HepG2 (cell line): ENCODE measurements at regions of chr9 and their contacts with region 1.

Region 1: DNA sequence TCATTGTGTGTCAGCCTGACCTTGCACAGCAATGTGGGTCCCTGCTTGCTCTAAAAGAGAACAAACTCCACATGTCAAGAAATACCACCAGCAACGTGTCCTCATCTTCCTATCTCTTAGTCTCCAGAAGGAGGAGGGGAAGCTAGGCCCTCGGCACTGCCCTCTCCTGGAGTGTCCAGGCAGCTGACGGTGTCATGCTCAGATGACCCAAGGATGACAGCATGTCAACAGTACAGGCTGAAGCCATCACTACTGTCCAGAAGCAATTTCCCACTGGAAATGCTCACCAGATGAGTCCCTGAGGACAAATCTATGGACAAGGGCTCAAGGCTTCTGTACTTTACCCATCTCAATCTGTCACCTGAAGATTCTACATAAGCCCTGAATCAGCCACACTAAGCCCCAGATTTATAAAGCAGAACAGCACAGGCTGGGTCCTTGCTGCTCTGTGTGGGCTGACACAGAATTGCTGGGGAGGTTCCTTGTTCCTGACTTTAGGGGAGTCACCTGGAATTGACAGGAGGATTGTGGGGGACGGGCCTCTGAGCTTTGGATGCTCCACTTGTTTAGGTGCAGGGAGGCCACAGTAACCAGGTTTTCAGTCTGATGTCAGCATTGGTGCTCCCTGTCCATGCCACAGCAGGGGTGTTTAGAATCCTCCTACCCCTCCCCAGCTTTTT is 210.2 kb downstream of the DAB2IP start:
- DNase-seq: peak; percentile 43
- ATAC-seq: peak; percentile 99
- H3K4me3 ChIP-seq: no peak overlapping the region
- H3K27ac ChIP-seq: no peak overlapping the region
- H3K4me1 ChIP-seq: no peaks in the 10 kb centered on the region
- H3K27me3 ChIP-seq: peaks cover 0 to 35% of the 10 kb centered on the region in 2 experiments; a peak in 3 of 5 replicates
- CTCF ChIP-seq: peak; percentile 92
- EP300 ChIP-seq: no peak
- POLR2A ChIP-seq: no peak
- RAD21 ChIP-seq: peak; percentile 78

Region 2: GRCh38 chr9:121545875-121546423 is 315.7 kb before region 1 on chr9:
- CTCF ChIA-PET with region 1: no interaction called
- POLR2A ChIA-PET with region 1: no interaction called
- in situ Hi-C with region 1: loop called (anchors 10 kb)
- intact Hi-C with region 1: loop called (anchors 2 kb)
- DNase-seq: peak; percentile 89
- ATAC-seq: peak; percentile 98
- H3K4me3 ChIP-seq: peak overlapping the region in 2 of 3 experiments; percentile 16 to 36; a peak in 2 of 6 replicates
- H3K27ac ChIP-seq: no peak overlapping the region
- H3K4me1 ChIP-seq: 0 out of 2 replicates have a peak, but pooled peaks cover 13% of the 10 kb centered on the region
- H3K27me3 ChIP-seq: peaks cover 0 to 5% of the 10 kb centered on the region in 2 experiments; a peak in 1 of 5 replicates
- CTCF ChIP-seq: peak; percentile 99
- EP300 ChIP-seq: no peak
- POLR2A ChIP-seq: no peak
- RAD21 ChIP-seq: peak; percentile 96

Region 3: GRCh38 chr9:121634329-121635261 is 227.0 kb before region 1 on chr9:
- CTCF ChIA-PET with region 1: interaction called, 3 read pairs
- POLR2A ChIA-PET with region 1: no interaction called
- in situ Hi-C with region 1: no loop called
- intact Hi-C with region 1: loop called (anchors 5 kb)
- DNase-seq: peak; percentile 57
- ATAC-seq: peak; percentile 79
- H3K4me3 ChIP-seq: peak overlapping the region; percentile 23 to 63 (median 30); a peak in 4 of 6 replicates
- H3K27ac ChIP-seq: no peak overlapping the region
- H3K4me1 ChIP-seq: peaks cover 52% of the 10 kb centered on the region
- H3K27me3 ChIP-seq: no peaks in the 10 kb centered on the region
- CTCF ChIP-seq: peak; percentile 91
- EP300 ChIP-seq: peak in 1 of 2 experiments; percentile 24; a peak in 1 of 4 replicates
- POLR2A ChIP-seq: no peak
- RAD21 ChIP-seq: peak; percentile 77

Region 4: DNA sequence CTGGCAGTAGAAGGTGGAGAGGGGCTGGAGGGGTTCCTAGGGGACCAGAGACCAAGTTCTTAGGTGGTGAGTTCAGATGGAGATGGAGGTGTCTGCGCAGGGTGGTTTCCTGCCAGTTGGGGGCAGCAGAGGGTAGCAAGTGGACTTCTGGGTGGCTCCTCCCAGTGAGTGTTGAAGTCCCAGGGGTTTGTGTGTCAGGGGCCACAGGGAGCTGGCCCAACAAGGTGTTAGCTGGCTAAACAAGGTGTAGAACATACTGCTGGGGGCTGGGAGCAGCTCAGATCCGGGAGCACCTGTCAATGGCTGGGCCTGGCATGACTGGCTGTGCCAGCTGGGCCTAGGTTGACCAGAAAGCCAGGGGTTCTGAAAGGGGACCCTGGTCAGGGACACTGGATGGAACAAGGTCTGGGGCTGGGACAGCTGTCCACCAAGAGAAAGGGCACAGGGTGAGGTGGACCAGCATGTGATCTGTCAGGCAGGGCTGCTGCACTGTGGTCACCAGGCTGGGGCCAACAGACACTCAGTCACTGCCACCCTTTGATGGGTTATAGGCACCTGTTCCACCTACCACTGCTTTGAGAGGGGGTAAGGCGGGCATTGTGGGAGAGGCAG is 174.6 kb before region 1 on chr9:
- CTCF ChIA-PET with region 1: interaction called, 9 read pairs
- POLR2A ChIA-PET with region 1: no interaction called
- in situ Hi-C with region 1: no loop called
- intact Hi-C with region 1: loop called (anchors 1 kb)
- DNase-seq: peak; percentile 63
- ATAC-seq: peak; percentile 87
- H3K4me3 ChIP-seq: no peak overlapping the region
- H3K27ac ChIP-seq: no peak overlapping the region
- H3K4me1 ChIP-seq: peaks cover 36% of the 10 kb centered on the region
- H3K27me3 ChIP-seq: no peaks in the 10 kb centered on the region
- CTCF ChIP-seq: peak; percentile 96
- EP300 ChIP-seq: no peak
- POLR2A ChIP-seq: no peak
- RAD21 ChIP-seq: peak; percentile 75

Region 5: DNA sequence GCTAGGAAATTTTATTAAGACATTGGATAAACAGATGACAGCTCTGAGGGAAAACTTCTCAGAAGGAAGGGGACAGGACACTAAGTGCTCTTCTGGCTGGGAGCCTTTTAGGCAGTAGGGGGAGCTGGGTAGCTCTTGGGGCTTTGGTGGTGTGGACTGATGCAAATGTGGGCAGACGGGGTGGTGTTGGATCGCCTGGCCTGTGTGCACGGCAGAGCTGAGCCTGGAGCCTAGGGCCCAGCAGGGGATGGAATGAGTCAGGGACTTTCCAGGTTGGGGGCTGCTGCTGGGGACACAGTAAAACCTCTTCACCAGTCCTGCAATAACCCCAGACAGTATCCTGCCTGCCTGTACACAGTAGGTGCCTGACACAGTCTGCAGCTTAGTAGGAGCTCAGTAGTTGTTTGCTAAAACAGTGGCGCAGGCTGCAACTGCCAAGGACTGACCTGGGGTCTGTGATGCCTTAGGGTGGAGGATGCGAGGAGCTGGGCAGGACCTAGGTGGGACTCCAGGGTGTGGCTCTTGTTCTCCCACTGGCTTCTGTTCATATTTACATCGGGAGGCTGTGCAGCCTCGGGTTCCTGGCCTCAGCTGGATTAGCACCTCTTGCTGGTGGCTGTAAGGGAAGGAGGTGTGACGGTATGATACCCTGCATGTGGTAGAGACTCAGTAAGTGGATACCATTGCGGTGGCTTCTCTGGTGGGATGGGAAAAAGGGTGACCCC is 126.4 kb before region 1 on chr9:
- CTCF ChIA-PET with region 1: no interaction called
- POLR2A ChIA-PET with region 1: no interaction called
- in situ Hi-C with region 1: loop called (anchors 10 kb)
- intact Hi-C with region 1: loop called (anchors 1 kb)
- DNase-seq: peak; percentile 62
- ATAC-seq: peak; percentile 87
- H3K4me3 ChIP-seq: no peak overlapping the region
- H3K27ac ChIP-seq: no peak overlapping the region
- H3K4me1 ChIP-seq: peaks cover 38% of the 10 kb centered on the region
- H3K27me3 ChIP-seq: no peaks in the 10 kb centered on the region; a peak in 2 of 5 replicates
- CTCF ChIP-seq: peak; percentile 82
- EP300 ChIP-seq: no peak
- POLR2A ChIP-seq: no peak
- RAD21 ChIP-seq: peak; percentile 77

Region 6: DNA sequence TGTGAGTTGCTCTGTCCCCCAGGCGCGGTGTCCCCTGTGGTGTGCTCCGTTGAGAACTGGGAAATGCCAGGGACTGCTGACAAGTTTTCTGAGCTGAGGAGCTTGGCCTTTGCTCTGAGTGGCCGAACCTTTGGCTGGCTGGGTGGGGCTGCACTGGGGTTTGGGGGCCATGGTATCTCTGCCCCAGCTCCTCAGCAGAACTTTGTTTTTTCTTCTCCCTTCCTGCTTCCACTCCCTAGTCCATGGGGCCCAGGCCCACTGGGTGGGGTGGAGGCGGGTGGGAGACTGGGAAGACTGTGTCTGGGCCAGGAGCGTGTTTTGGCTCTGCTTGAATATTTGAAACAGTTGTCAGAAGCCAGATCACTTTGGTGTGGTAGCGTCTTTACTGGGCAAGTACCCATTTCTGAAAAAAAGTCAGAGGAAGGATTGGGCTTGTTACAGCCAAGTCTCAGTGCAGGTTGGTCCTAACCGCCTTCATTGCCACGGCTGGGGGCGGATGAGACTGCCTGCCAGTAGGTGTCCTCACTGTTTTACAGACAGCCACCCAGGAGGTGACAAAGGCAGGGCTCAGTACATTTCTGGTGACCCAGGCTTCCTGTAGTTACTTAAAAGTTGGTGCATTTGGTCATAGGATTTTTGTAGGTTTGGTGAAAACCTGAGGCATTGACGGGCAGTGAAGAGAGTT is 117.5 kb before region 1 on chr9:
- CTCF ChIA-PET with region 1: interaction called, 7 read pairs
- POLR2A ChIA-PET with region 1: interaction called, 3 read pairs
- in situ Hi-C with region 1: loop called (anchors 10 kb)
- intact Hi-C with region 1: loop called (anchors 1 kb)
- DNase-seq: peak; percentile 74
- ATAC-seq: peak; percentile 83
- H3K4me3 ChIP-seq: peak overlapping the region; percentile 70 to 85 (median 71)
- H3K27ac ChIP-seq: peak overlapping the region; percentile 48
- H3K4me1 ChIP-seq: peaks cover 91% of the 10 kb centered on the region
- H3K27me3 ChIP-seq: no peaks in the 10 kb centered on the region
- CTCF ChIP-seq: peak; percentile 94
- EP300 ChIP-seq: no peak
- POLR2A ChIP-seq: peak in 1 of 2 experiments; percentile 34; a peak in 1 of 4 replicates
- RAD21 ChIP-seq: peak; percentile 75

Region 7: GRCh38 chr9:121992571-121993212 is 131.1 kb after region 1 on chr9:
- CTCF ChIA-PET with region 1: interaction called, 3 read pairs
- POLR2A ChIA-PET with region 1: no interaction called
- in situ Hi-C with region 1: no loop called
- intact Hi-C with region 1: loop called (anchors 1 kb)
- DNase-seq: peak; percentile 65
- ATAC-seq: peak; percentile 53
- H3K4me3 ChIP-seq: no peak overlapping the region
- H3K27ac ChIP-seq: no peak overlapping the region
- H3K4me1 ChIP-seq: peaks cover 38% of the 10 kb centered on the region
- H3K27me3 ChIP-seq: no peaks in the 10 kb centered on the region
- CTCF ChIP-seq: peak; percentile 79
- EP300 ChIP-seq: no peak
- POLR2A ChIP-seq: no peak
- RAD21 ChIP-seq: peak; percentile 71